ENCODE measurements at regions of chr5 and their contacts with region 1.

Region 1: DNA sequence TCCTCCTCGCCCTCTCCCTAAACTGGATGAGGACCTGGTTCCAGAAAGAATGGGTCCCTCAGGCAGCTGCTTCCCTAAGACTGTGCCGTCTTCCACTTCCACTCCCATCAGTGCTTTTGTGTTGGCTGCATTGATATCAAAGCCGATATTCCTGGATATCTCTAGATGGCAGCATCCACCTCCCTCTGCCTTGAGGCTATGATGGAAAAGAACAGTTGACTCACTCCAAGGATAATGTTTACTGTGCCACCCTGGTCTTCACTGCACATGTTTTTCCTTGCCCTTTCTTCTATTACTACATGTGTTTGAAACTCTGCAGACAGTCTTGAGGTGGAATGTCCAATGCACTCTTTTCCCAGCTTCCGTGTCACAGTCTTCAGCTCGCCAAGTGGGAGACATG is 211.6 kb downstream of the MAST4 start:
- DNase-seq: peak; percentile 63
- ATAC-seq: peak; percentile 84
- H3K4me3 ChIP-seq: no peak overlapping the region
- H3K27ac ChIP-seq: no peak overlapping the region
- H3K4me1 ChIP-seq: 0 out of 2 replicates have a peak, but pooled peaks cover 5% of the 10 kb centered on the region
- H3K27me3 ChIP-seq: no peaks in the 10 kb centered on the region
- CTCF ChIP-seq: peak; percentile 51

Region 2: GRCh38 chr5:66796305-66797292 is 11.1 kb before region 1 on chr5:
- CTCF ChIA-PET with region 1: no interaction called
- POLR2A ChIA-PET with region 1: no interaction called
- intact Hi-C with region 1: no loop called
- DNase-seq: peak; percentile 1
- ATAC-seq: peak; percentile 48; the same call in 1 of the 2 replicates
- H3K4me3 ChIP-seq: no peak overlapping the region
- H3K27ac ChIP-seq: no peak overlapping the region
- H3K4me1 ChIP-seq: no peaks in the 10 kb centered on the region
- H3K27me3 ChIP-seq: no peaks in the 10 kb centered on the region
- CTCF ChIP-seq: peak; percentile 37; the same call in 1 of the 2 replicates

Region 3: DNA sequence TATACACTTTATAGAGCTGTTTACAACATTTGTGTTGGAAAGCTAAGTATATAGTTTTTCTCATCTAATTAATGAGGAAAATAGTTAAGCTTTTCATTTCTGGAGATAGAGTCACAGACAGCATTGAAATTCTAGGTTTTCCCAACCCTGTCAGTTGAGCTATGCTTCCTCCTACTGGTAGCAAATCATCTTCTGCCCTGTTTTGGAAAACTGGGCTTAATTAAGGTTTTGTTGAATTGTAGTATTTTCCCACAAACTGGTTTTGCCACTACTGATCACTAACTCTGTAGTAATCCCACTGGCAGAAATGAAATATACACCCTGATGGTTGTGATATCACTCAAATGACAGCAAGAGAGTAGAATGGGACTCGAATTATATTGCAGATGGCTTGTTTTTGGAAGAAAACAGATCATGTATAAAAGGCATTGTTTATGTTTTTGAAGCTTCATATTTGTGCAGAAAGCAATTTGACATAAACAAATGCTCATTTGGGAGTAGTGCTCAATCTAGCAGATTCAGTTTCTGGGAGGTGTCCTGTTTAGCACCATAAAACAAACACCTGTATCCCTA is 342.3 kb after region 1 on chr5:
- CTCF ChIA-PET with region 1: no interaction called
- POLR2A ChIA-PET with region 1: no interaction called
- intact Hi-C with region 1: loop called (anchors 2 kb)
- DNase-seq: peak; percentile 58
- ATAC-seq: no peak
- H3K4me3 ChIP-seq: no peak overlapping the region
- H3K27ac ChIP-seq: no peak overlapping the region
- H3K4me1 ChIP-seq: no peaks in the 10 kb centered on the region
- H3K27me3 ChIP-seq: no peaks in the 10 kb centered on the region
- CTCF ChIP-seq: peak; percentile 71

Region 4: DNA sequence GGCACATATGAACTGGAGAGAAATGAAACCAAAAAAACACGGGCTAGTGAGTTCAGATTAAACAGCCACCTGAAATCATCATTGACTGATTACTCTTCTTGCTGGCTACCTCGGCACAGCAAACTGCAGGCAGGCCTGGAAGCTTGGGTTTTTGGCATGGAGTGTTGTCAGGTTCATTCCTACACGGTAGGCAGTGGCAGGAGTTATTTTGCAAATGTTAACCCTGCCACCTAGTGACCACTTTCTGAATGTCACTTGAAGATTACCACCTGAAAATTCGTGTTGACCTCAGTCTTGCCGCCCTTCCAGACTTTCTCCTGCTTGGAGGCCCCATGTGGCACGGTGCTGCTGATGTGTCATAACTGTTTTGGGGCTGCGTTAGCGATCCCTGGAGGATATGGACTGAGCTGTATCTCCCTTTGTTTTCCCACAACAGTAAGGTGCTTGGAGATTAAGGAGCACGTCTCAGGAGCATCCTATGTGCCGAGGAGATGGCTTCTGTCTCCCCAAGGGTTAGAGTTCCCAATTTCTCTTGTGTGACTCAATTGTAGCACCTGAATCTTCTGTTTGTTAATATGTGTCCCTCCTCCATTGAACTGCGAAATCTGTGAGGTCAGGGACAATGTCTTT is 401.5 kb after region 1 on chr5:
- CTCF ChIA-PET with region 1: no interaction called
- POLR2A ChIA-PET with region 1: no interaction called
- intact Hi-C with region 1: loop called (anchors 5 kb)
- DNase-seq: peak; percentile 85
- ATAC-seq: peak; percentile 47
- H3K4me3 ChIP-seq: no peak overlapping the region
- H3K27ac ChIP-seq: no peak overlapping the region
- H3K4me1 ChIP-seq: peaks cover 53% of the 10 kb centered on the region
- H3K27me3 ChIP-seq: no peaks in the 10 kb centered on the region
- CTCF ChIP-seq: peak; percentile 68

Measured in PC-3 (cell line).